OCI-LY7 (cell line): ENCODE measurements at regions of chr6 and their contacts with region 1.

Region 1: DNA sequence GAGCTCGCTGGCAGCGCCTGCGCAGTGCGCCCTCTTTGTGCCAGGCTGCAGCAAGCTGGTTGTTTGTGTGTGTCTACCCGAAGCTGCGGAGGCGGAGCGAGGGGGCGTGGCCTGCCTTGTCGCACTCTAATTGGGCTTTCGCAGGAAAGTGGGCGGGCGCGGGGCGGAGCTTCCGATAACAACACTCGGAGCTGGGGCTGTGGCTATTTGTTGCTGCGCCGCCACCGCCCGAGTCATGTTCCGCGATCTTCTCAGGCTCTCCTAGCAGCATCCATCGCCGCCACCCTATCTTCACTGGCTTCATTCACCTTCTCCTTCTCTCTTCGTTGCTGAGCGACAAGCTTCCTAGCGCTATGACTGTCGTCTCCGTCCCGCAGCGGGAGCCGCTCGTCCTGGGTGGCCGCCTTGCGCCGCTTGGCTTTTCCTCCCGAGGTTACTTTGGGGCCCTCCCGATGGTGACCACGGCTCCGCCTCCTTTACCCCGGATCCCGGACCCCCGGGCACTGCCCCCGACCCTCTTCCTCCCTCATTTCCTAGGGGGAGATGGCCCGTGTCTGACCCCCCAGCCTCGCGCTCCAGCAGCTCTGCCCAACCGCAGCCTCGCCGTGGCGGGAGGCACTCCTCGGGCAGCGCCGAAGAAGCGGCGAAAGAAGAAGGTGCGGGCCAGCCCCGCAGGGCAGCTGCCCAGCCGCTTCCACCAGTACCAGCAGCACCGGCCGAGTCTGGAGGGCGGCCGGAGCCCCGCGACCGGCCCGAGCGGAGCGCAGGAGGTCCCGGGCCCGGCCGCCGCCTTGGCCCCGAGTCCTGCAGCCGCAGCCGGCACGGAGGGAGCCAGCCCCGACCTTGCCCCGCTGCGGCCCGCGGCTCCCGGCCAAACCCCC is at the start of gene PNRC1:
- DNase-seq: peak; percentile 99
- H3K4me3 ChIP-seq: peak within 1 kb of the TSS; percentile 96
- H3K27ac ChIP-seq: peak within 1 kb of the TSS; percentile 84
- H3K4me1 ChIP-seq: peaks cover 25% of the 10 kb centered on the region
- CTCF ChIP-seq: no peak
- total RNA-seq, gene PNRC1: 22.6 and 26.7 TPM in 2 replicates

Region 2: GRCh38 chr6:87907521-87907920 is 1173.3 kb before region 1 on chr6:
- CTCF ChIA-PET with region 1: no interaction called
- POLR2A ChIA-PET with region 1: no interaction called
- intact Hi-C with region 1: loop called (anchors 5 kb)
- DNase-seq: peak; percentile 72
- H3K4me3 ChIP-seq: no peak overlapping the region
- H3K27ac ChIP-seq: peak overlapping the region; percentile 99
- H3K4me1 ChIP-seq: peaks cover 98% of the 10 kb centered on the region
- CTCF ChIP-seq: no peak

Region 3: GRCh38 chr6:88982720-88983119 is 98.1 kb before region 1 on chr6:
- CTCF ChIA-PET with region 1: no interaction called
- POLR2A ChIA-PET with region 1: interaction called, 4 read pairs
- intact Hi-C with region 1: loop called (anchors 2 kb)
- DNase-seq: peak; percentile 72
- H3K4me3 ChIP-seq: no peak overlapping the region
- H3K27ac ChIP-seq: no peak overlapping the region
- H3K4me1 ChIP-seq: no peaks in the 10 kb centered on the region
- CTCF ChIP-seq: peak; percentile 98

Region 4: GRCh38 chr6:89044356-89045010 is 36.3 kb before region 1 on chr6:
- CTCF ChIA-PET with region 1: no interaction called
- POLR2A ChIA-PET with region 1: interaction called, 11 read pairs
- intact Hi-C with region 1: no loop called
- DNase-seq: no peak
- H3K4me3 ChIP-seq: no peak overlapping the region
- H3K27ac ChIP-seq: no peak overlapping the region
- H3K4me1 ChIP-seq: no peaks in the 10 kb centered on the region
- CTCF ChIP-seq: no peak

Region 5: GRCh38 chr6:89297695-89298351 is 217.0 kb after region 1 on chr6:
- CTCF ChIA-PET with region 1: no interaction called
- POLR2A ChIA-PET with region 1: no interaction called
- intact Hi-C with region 1: no loop called
- DNase-seq: no peak
- H3K4me3 ChIP-seq: no peak overlapping the region
- H3K27ac ChIP-seq: no peak overlapping the region
- H3K4me1 ChIP-seq: no peaks in the 10 kb centered on the region
- CTCF ChIP-seq: no peak

Region 6: DNA sequence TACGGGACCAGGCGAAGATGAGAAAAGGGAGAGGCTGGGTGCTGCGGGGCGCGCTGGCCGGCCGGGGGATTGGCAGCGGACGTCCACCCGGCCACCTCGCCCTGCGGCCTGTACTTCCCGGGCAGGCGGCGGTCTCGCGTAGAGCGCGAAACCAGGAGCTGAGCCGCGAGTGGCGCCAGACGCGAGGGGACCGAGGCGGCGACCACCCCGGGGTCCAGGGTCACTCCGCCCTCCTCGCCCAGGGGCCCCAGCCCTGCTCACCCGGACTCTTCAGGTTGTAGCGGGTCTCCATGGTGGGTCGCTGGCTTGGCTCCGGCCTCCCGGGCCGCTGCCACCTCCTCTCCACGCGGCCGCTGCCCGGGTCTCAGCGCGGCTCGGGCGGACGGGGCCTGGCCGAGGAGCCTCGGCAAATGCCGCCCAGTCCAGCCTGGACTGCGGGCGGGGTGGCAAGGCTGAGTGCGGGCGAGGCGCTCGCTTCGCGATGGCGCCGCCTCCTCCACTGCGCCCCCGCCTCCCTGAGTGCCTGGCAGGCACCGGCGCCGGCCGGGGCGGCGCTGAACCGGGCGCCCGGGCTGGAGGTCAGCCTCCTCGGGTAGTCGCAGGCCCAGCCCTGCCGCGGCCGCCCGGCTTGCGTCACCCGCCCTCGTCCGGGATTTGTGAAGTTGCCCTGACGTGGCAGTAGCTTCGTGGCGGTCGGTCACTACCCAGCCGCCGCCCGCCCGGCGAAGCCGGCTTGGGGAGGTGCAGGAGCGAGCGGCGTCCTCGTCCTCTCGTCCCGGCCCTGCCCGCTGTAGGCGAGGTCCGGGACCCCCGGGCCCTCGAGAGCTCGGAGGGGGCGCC is 271.7 kb after region 1 on chr6 and contains the start of gene UBE2J1:
- CTCF ChIA-PET with region 1: interaction called, 3 read pairs
- POLR2A ChIA-PET with region 1: interaction called, 9 read pairs
- intact Hi-C with region 1: loop called (anchors 2 kb)
- DNase-seq: peak; percentile 86
- H3K4me3 ChIP-seq: peak within 1 kb of the TSS; percentile 78
- H3K27ac ChIP-seq: peak within 1 kb of the TSS; percentile 99
- H3K4me1 ChIP-seq: peaks cover 69% of the 10 kb centered on the region
- CTCF ChIP-seq: no peak
- total RNA-seq, gene UBE2J1: 117 and 123 TPM in 2 replicates